ENCODE measurements at regions of chr11 and their contacts with region 1.

Region 1: DNA sequence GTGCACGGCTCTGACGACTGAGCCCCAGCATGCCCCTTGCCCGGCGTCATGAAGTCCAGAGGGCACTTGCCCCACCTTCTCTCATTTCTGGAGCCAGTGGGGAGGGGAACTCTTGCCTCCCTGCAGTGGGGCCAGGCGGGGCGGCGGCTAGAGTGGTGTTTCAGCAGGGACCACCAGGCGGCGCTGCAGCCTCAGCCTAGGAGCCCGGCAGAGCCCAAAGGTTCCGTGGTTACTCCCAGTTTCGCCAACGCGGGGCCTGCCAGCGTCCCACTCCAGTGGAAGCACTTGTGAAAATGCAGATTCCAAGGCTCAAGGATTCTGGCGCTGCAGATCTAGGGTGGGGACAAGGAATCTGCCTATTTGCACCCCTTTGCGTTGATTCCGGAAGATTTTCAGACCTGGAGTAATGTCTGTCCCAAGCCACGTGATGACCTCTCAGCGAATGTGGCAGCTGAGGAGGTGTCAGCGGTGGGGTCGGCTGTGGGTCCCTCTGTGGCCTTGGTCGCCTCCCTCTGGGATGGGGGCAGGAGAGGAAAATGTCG is 55.7 kb downstream of the CD82 start:
- DNase-seq: no peak
- H3K4me3 ChIP-seq: no peak overlapping the region
- H3K27ac ChIP-seq: no peak overlapping the region
- H3K4me1 ChIP-seq: no peaks in the 10 kb centered on the region
- H3K27me3 ChIP-seq: no peaks in the 10 kb centered on the region
- CTCF ChIP-seq: peak; percentile 83 to 94

Region 2: DNA sequence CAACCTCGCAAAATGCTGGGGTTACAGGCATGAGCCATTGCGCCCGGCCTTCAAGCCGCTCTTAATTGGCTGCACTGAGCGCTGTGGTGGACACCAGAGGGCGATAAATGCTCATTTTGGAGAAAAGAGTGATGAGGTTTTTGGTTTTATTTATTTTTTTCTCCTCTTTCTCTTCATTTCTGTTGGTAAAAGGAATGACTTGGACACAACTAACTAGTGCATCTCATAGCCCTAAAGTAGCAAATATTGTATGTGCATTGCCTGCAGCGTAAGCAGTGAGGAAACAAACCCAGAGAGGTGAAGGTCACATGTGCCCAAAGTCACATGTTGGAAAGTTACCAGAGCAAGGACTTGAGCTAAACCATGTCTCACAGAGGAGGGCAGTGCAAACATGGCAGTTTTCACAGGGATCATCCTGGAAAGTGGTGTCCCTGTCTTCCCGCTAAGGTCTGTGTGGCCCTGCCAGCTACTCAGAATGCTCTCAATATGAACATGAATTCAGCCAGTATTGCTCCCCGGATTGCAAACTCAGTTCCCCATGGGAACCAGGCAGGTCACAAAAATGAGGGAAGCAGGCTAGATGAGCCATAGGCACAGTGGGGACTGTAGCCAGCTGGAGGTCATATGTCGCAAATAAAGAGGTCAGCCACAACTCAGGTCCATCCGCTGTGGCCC is 64.3 kb before region 1 on chr11:
- CTCF ChIA-PET with region 1: interaction called, 3 read pairs
- dilution Hi-C with region 1: no loop called
- in situ Hi-C with region 1: no loop called
- intact Hi-C with region 1: loop called (anchors 1 kb)
- DNase-seq: no peak
- H3K4me3 ChIP-seq: no peak overlapping the region
- H3K27ac ChIP-seq: no peak overlapping the region
- H3K4me1 ChIP-seq: peaks cover 27% of the 10 kb centered on the region
- H3K27me3 ChIP-seq: no peaks in the 10 kb centered on the region
- CTCF ChIP-seq: peak; percentile 68 to 72

Region 3: DNA sequence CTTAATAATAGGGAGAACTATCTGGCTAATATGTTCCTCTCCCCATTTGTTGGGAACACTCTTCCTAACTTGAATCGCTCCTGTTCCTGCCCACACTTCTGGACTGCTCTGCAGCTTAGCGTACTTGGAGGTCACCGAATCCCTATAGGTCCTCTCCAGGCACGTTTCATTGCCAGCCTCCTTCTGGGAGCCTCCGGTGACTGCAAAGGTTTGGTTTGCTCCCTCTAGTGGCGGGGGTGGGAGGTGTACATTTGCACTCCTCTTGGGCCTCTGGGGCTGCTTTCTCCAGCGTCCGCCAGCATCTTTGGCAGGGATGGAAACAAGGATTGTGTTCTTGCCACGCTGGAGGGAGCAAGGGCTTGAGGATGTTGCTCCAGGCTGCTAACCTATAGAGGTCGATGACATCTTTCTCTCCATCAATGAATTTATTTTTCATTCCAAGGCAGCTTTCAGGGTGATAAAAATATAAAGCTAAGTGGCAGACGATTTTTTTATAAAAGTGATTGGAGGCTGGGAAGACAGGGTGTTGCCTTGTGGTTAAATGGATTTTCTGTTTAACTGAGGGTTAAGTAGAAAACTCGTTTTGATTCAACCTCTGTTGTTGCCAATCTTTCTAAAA is 154.3 kb after region 1 on chr11:
- CTCF ChIA-PET with region 1: no interaction called
- dilution Hi-C with region 1: no loop called
- in situ Hi-C with region 1: no loop called
- intact Hi-C with region 1: loop called (anchors 1 kb)
- DNase-seq: peak; percentile 32
- H3K4me3 ChIP-seq: no peak overlapping the region
- H3K27ac ChIP-seq: no peak overlapping the region
- H3K4me1 ChIP-seq: no peaks in the 10 kb centered on the region
- H3K27me3 ChIP-seq: peaks cover 4% of the 10 kb centered on the region
- CTCF ChIP-seq: peak; percentile 82 to 85

Region 4: GRCh38 chr11:44893846-44894617 is 272.8 kb after region 1 on chr11:
- CTCF ChIA-PET with region 1: no interaction called
- dilution Hi-C with region 1: loop called (anchors 25 kb)
- in situ Hi-C with region 1: loop called in 1 of 2 experiments (anchors 10 kb)
- intact Hi-C with region 1: loop called (anchors 1 kb)
- DNase-seq: peak; percentile 16
- H3K4me3 ChIP-seq: no peak overlapping the region
- H3K27ac ChIP-seq: no peak overlapping the region
- H3K4me1 ChIP-seq: no peaks in the 10 kb centered on the region
- H3K27me3 ChIP-seq: peaks cover 2% of the 10 kb centered on the region
- CTCF ChIP-seq: peak; percentile 75 to 92

Region 5: GRCh38 chr11:44911029-44911814 is 290.0 kb after region 1 on chr11:
- CTCF ChIA-PET with region 1: no interaction called
- dilution Hi-C with region 1: no loop called
- in situ Hi-C with region 1: loop called (anchors 10 kb)
- intact Hi-C with region 1: loop called (anchors 1 kb)
- DNase-seq: peak; percentile 51
- H3K4me3 ChIP-seq: no peak overlapping the region
- H3K27ac ChIP-seq: no peak overlapping the region
- H3K4me1 ChIP-seq: no peaks in the 10 kb centered on the region
- H3K27me3 ChIP-seq: no peaks in the 10 kb centered on the region
- CTCF ChIP-seq: peak; percentile 75 to 78

Measured in mammary epithelial cell (primary cell).